ENCODE measurements at regions of chr6 and their contacts with region 1.

Region 1: GRCh38 chr6:114611696-114612095 is 268.9 kb upstream of the HS3ST5 start:
- DNase-seq: no peak
- ATAC-seq: no peak
- H3K4me3 ChIP-seq: no peak overlapping the region
- H3K27ac ChIP-seq: no peak overlapping the region
- H3K4me1 ChIP-seq: no peaks in the 10 kb centered on the region
- H3K27me3 ChIP-seq: no peaks in the 10 kb centered on the region

Region 2: DNA sequence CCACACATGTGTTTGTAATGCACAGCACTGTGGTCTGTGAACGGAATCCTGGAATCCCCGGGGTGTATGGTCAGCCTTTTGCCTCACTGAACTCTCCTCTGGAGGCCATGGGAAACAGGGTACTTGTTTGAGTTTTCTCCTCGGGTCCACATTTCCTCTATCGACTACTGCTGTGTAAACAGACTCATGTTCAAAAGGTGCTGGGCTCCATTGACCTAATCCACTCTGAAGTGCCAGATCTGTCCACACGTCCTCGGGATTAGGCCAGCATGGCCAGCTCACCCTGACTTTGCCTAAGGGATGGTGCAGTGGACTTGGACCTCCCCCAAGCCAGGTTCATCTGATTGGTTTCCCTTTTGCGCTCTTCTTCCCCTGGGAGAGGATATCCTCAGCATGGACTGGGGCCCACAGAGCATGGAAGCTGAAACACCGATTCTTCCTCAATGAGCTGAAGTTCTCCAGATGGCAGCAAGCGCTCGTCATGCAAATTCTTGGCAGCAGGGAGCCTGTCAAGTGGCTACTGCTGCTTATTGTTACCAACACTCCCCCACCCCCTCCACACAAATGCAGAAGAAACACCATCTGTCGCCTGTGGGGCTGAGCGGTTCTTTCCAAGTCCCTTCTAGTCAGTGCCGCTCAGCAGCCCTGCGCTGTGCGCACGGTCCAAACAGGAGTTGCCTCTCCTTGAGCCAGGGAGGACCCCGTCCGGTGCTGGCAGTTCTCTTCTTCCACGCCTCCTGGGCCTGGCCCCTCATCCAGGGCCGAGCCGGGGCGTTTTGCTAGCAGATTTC is 1047.1 kb before region 1 on chr6:
- intact Hi-C with region 1: no loop called
- DNase-seq: peak; percentile 82 to 83
- ATAC-seq: peak; percentile 73
- H3K4me3 ChIP-seq: no peak overlapping the region
- H3K27ac ChIP-seq: no peak overlapping the region
- H3K4me1 ChIP-seq: no peaks in the 10 kb centered on the region
- H3K27me3 ChIP-seq: no peaks in the 10 kb centered on the region

Region 3: GRCh38 chr6:114543696-114544095 is 68.0 kb before region 1 on chr6:
- intact Hi-C with region 1: no loop called
- DNase-seq: no peak
- ATAC-seq: no peak
- H3K4me3 ChIP-seq: no peak overlapping the region
- H3K27ac ChIP-seq: no peak overlapping the region
- H3K4me1 ChIP-seq: no peaks in the 10 kb centered on the region
- H3K27me3 ChIP-seq: no peaks in the 10 kb centered on the region

Region 4: DNA sequence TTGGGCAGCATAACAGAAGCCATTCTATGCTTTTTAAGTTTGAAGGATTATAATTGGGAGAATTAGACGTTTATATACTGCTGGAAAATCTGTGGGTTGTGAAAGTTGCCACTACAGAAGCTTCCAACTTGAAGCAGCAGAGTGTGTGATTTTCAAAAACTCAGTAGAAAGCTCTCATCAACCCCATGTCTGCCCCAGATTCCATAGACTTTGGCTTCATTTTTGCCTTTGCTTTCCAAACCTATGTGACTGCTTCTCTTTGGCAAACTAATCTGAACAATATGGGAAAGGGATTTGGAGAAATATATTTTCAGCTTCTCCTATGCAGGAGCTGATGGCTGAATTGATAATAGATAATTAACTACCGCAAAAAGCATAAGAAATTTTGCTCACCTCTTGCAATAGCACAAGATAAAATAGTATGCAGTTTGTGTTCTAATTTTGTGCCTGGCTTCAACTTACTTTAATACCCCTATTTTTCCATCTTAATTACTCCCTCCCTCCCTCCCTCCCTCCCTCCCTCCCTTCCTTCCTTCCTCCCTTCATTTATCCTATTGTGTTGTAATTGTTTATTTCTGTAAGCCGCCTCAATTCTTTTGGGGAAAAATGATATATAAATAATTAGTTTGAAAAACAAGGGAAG is 54.7 kb before region 1 on chr6:
- intact Hi-C with region 1: loop called in 1 of 2 experiments (anchors 2 kb)
- DNase-seq: no peak
- ATAC-seq: no peak
- H3K4me3 ChIP-seq: no peak overlapping the region
- H3K27ac ChIP-seq: no peak overlapping the region
- H3K4me1 ChIP-seq: no peaks in the 10 kb centered on the region
- H3K27me3 ChIP-seq: no peaks in the 10 kb centered on the region